GM10248 (cell line): ENCODE measurements at regions of chr10 and their contacts with region 1.

Region 1: DNA sequence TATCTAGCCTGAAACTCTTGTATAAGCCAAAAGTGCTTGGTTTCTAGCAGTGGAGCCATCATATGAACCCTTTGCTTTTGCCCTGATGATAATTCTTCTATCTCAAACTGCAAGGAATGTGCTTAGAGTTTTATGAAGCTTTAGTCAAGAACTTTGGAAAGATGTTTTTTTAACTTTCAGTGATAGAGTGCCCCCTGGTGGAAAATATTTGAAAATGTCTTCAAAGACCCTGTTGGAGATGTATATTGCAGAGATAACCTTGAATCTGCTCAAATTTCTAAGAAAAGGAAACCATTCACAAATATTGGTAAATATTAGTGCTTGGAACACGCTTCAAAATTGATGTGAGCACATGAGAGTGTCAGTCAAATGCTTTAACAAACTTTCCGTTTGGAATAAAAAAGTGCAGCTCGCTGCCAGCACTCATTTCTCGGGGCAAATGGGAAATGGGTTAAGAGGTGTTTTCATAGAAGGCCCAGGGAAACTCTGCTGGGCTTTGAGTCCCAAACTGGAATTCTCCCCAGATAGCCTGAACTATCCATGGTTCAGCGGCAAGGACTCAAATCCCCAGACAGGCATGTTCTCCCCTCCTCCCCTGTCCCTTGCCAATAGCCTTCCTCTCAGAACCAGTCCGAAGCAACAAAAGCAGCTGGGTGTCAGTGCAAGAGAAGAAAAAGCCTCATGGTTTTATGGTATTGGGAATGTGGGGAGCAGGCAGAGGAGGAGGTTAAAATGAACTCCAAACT is 129.3 kb downstream of the MYOF start:
- DNase-seq: peak; percentile 48
- CTCF ChIP-seq: peak; percentile 54

Region 2: DNA sequence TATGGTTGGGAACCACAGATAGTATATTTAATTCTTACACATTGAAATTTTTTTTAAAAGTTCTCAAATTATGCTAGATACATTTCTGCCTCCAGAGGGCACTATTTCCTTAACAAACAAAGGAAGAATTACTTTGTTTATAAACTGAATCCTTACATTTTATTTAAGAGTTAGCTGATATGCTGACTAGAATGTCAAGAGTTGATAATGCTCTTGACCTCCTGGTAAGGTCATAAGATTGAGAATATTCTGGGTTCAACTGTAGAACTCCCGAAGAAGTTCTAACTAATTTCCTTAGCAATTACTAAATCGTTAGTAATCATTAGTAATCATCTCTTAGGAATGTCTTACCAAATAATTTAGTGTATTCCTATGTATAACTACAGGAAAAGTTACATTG is 387.5 kb before region 1 on chr10:
- CTCF ChIA-PET with region 1: interaction called, 14 read pairs
- POLR2A ChIA-PET with region 1: no interaction called
- DNase-seq: peak; percentile 14
- CTCF ChIP-seq: peak; percentile 47

Region 3: DNA sequence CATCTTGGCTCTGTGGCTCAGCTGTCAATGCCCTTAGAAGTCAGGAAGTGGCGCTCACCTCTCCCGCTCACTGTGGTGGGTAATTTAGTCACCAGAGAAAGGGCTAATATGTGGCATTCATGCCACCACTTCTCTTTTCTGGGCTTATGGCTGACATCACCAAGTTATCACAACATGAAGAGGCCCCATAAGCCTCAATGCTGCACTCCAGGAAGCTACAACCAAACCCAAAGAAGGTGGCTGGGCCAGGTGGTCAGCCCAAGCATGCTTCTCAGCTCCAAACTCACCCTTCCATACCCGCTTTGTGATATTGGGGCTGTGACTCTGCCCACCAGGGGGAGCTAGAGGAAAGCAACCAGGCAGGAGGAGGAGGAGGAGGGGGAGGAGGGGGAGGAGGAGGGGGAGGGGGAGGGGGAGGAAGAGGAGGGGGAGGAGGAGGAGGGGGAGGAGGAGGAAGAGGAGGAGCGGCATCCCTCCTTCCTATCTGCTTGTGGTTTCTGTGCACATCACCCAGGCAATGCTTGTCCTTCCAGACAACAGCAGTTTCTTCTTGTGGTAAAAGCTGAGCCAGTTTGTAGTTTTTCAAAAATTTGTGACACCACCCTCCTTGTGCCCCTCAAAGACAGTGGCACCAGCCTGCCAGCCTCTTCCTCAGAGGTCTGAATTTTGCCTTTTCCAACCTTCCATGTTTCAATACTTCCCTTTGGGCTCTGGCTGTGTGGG is 237.0 kb before region 1 on chr10:
- CTCF ChIA-PET with region 1: interaction called, 11 read pairs
- POLR2A ChIA-PET with region 1: no interaction called
- DNase-seq: peak; percentile 67
- CTCF ChIP-seq: peak; percentile 79

Region 4: DNA sequence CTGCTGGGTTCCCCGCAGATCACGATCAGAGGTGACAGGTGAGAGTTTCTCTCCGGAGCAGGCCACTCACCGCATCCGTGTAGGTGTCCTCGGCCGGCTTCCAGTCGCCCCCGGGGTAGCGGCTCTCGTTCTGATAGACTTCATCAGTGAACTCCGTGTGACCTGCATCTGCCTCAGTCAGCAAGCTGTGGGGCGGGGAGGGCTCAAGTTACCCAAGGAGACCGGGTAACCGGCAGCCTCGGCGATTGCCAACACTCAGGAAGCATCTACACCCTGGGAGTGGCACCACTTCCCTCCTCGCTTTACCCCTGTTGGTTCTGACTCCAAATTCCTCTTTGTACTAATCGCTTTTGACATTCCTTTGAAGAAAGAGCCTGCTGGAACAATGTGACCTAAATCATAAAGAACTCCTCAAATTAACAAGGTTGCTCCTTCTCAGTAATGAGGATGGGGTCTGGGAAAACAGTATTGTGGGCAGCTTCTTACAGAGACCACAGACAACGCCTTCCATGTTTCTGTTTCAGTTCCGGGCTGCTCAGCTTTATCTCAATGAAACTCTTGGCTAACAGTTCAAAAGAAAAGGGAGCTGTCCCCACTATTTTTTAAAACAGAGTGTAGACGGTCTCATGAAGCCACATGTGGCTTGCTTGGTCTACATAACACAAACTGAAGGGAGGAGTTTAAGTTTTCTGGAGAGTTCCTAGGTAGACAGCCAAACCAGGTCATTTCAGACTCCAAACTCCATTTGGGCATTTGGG is 11.3 kb after region 1 on chr10:
- CTCF ChIA-PET with region 1: interaction called, 10 read pairs
- POLR2A ChIA-PET with region 1: no interaction called
- DNase-seq: no peak
- CTCF ChIP-seq: no peak